Dorsolateral prefrontal cortex (tissue), 120 donors: ENCODE measurements at regions of chr18 and their contacts with region 1.

Region 1: DNA sequence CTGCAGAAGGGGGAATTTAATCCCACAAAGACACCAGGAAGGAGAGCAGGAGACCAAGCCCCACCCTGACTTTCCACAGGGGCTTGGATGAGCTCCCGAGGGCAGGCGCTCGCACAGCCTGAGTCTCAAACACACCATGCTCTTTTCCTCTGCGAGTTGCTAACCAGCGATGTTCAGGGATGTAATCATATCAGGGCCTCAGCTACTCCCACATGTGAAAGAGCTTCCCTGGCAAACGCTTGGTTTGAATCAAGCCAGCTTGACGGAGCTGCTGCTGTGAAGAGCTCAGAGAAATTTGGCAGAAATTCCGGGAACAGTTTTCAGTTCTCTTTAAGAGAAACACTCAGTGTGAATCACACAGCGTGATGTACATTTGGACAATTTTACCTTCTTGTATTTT is 385.8 kb downstream of the GALR1 start:
- DNase-seq: peak in 9 of 10 donors; percentile 9 to 76 (median 52)
- H3K4me3 ChIP-seq: peak overlapping the region in 3 of 59 donors; percentile 9 to 13 (median 10)
- H3K27ac ChIP-seq: peak overlapping the region in 6 of 59 donors; percentile 27 to 55 (median 32)
- H3K27me3 ChIP-seq: peaks cover 0 to 7% (median 0%) of the 10 kb centered on the region in 45 donors
- CTCF ChIP-seq: no peak

Region 2: DNA sequence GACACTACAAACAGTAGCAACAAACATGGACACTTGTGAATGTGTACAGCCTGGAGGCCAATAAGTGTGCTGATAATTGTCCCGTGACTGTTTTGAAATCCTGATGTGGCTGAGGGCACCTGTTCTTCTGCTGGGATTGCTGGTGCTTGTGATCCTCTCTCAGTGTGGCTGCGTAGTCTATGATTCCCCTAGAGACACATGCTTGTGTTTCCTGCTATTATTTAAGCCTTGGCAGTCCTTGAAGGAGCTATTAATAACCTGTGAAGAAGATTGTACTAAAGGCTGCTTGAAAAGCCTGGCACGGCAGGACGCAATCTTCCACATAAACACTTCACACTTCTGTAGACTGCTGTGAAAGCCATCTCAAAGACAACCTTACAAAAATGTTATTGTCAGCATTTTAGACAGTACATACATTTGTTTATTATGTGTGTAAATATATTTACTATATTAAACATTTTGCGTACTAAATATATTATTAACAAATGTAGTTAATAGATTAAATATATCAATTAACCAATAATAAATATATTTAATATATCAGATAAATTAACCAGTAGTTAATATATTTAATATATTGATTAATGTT is 314.4 kb before region 1 on chr18:
- intact Hi-C with region 1: loop called in 1 of 2 experiments (anchors 5 kb)
- DNase-seq: no peak
- H3K4me3 ChIP-seq: no peak overlapping the region
- H3K27ac ChIP-seq: no peak overlapping the region
- H3K27me3 ChIP-seq: peaks cover 0 to 17% (median 0%) of the 10 kb centered on the region in 45 donors
- CTCF ChIP-seq: no peak

Region 3: DNA sequence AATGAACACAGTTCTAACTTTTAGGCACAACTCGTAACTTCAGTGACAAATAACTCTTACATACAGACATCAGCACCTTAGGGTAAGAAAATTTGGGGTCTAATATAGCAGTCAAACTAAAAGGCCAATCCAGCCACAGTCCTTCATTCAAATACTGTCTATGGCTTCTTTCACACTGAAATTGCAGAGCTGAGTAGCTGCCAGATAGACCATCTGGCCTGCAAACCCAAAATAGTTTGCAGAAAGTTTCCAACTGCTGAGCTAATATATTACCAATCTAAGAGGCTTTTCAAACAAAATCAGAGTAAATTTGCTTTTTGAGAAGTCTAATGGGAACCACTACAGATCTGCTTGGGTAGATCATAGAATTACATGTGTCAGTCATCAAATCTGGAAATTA is 202.4 kb before region 1 on chr18:
- intact Hi-C with region 1: no loop called
- DNase-seq: no peak
- H3K4me3 ChIP-seq: no peak overlapping the region
- H3K27ac ChIP-seq: no peak overlapping the region
- H3K27me3 ChIP-seq: no peaks in the 10 kb centered on the region
- CTCF ChIP-seq: no peak

Region 4: DNA sequence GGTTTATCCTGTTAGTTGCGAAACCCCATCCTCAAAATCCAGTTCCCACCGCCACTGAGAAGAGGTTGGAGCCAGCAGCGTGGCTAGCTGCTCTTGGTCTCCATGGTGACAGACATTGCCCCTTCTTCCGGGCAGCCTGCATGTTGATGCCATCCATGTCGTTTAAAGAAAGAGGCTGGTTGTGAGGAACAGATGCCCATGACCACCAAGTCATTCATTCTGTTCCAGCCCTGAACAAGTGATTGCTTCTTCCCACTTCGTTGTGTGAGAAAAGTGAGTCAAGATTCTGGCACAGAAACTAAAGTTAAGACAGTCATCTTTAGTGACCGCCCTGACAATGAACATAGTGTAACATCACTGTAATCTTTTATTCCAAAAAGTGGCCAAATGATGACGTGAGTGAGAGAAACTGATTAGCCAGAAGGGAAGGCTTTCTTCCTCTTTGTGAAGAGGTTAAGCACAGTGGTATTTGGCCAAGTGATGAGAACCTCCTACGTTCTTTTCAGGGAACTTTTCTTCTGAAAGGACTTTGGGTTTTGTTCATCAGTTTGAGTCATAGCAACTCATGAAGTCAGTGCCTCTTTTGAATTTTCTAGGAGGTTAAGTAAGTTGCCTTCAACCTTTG is 113.3 kb before region 1 on chr18:
- intact Hi-C with region 1: loop called in 1 of 2 experiments (anchors 10 kb)
- DNase-seq: no peak
- H3K4me3 ChIP-seq: no peak overlapping the region
- H3K27ac ChIP-seq: no peak overlapping the region
- H3K27me3 ChIP-seq: peaks cover 0 to 14% (median 0%) of the 10 kb centered on the region in 45 donors
- CTCF ChIP-seq: no peak

Region 5: GRCh38 chr18:77702686-77703085 is 67.2 kb after region 1 on chr18:
- intact Hi-C with region 1: no loop called
- DNase-seq: peak in 3 of 10 donors; percentile 14 to 36 (median 32)
- H3K4me3 ChIP-seq: no peak overlapping the region
- H3K27ac ChIP-seq: no peak overlapping the region
- H3K27me3 ChIP-seq: peaks cover 0 to 33% (median 4%) of the 10 kb centered on the region in 45 donors
- CTCF ChIP-seq: peak in 46 of 56 donors; percentile 8 to 62 (median 30)